ENCODE measurements at regions of chr6 and their contacts with region 1.

Region 1: DNA sequence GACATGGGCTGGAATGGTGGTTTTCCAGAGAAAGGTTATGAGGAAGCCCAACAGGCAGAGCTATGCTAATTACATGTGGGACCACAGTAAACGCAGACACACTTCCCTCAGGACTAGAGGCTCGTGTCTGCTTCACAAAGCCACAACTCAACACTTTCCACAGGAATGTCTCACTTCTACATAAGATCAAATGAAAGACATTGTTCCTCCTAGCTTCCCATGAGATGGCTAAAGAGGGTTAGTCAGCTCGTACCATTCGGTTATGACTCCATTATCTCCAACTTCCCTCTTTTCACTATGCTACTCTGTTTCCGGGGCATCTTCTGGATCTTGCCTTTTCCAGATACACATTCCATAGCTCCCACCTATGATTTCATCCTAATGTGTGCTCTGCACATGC is 29.1 kb upstream of the ZC3H12D start:
- DNase-seq: peak; percentile 12 to 49 (median 43)
- H3K4me3 ChIP-seq: no peak overlapping the region
- H3K4me3 Mint-ChIP-seq: no peak overlapping the region
- H3K27ac ChIP-seq: no peak overlapping the region
- H3K27ac Mint-ChIP-seq: peak overlapping the region in 3 of 7 donors; percentile 33 to 80 (median 73)
- H3K4me1 ChIP-seq: no peaks in the 10 kb centered on the region
- H3K4me1 Mint-ChIP-seq: peaks cover 6% of the 10 kb centered on the region
- H3K27me3 ChIP-seq: no peaks in the 10 kb centered on the region
- H3K27me3 Mint-ChIP-seq: no peaks in the 10 kb centered on the region
- CTCF ChIP-seq: no peak

Region 2: GRCh38 chr6:149028767-149029405 is 485.0 kb before region 1 on chr6:
- intact Hi-C with region 1: loop called in 1 of 2 experiments (anchors 10 kb)
- DNase-seq: peak; percentile 68 to 77 (median 77)
- H3K4me3 ChIP-seq: no peak overlapping the region
- H3K4me3 Mint-ChIP-seq: no peak overlapping the region
- H3K27ac ChIP-seq: no peak overlapping the region
- H3K27ac Mint-ChIP-seq: no peak overlapping the region
- H3K4me1 ChIP-seq: no peaks in the 10 kb centered on the region
- H3K4me1 Mint-ChIP-seq: peaks cover 16% of the 10 kb centered on the region
- H3K27me3 ChIP-seq: no peaks in the 10 kb centered on the region
- H3K27me3 Mint-ChIP-seq: peaks cover 0 to 6% (median 3%) of the 10 kb centered on the region in 3 donors
- CTCF ChIP-seq: peak; percentile 81

Region 3: DNA sequence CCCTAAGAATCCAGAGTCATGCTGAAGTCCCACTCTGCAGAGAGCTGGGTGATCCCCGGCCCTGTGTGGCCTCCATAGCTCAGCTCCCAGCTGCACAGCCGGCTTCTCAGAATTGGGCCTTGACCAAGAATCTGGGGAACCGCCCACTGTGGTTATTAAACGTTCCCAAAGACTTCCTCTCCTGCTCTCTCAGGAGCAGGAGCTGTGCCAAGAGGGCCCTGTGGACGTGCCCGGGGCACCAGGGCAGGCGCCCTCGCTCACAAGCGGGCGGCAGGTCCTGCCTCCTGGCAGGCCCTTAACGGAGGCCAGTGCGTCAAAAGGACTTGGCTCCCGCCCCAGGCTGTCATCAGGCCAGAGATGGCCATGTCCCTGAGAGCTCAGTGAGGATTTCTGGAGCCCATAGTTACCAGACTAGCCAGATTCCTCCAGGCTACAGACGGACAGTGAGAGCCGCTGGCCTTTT is 59.5 kb before region 1 on chr6:
- intact Hi-C with region 1: loop called in 1 of 2 experiments (anchors 5 kb)
- DNase-seq: no peak
- H3K4me3 ChIP-seq: peak overlapping the region in 1 of 3 experiments; percentile 30
- H3K4me3 Mint-ChIP-seq: no peak overlapping the region
- H3K27ac ChIP-seq: no peak overlapping the region
- H3K27ac Mint-ChIP-seq: no peak overlapping the region
- H3K4me1 ChIP-seq: peaks cover 19 to 27% of the 10 kb centered on the region in 2 donors
- H3K4me1 Mint-ChIP-seq: peaks cover 14% of the 10 kb centered on the region
- H3K27me3 ChIP-seq: peaks cover 4 to 17% of the 10 kb centered on the region in 2 donors
- H3K27me3 Mint-ChIP-seq: peaks cover 11 to 22% (median 21%) of the 10 kb centered on the region in 3 donors
- CTCF ChIP-seq: no peak

Region 4: GRCh38 chr6:149468179-149468578 is 45.7 kb before region 1 on chr6:
- intact Hi-C with region 1: no loop called
- DNase-seq: no peak
- H3K4me3 ChIP-seq: no peak overlapping the region
- H3K4me3 Mint-ChIP-seq: no peak overlapping the region
- H3K27ac ChIP-seq: no peak overlapping the region
- H3K27ac Mint-ChIP-seq: peak overlapping the region in 3 of 7 donors; percentile 54 to 79 (median 68)
- H3K4me1 ChIP-seq: peaks cover 12 to 13% of the 10 kb centered on the region in 2 donors
- H3K4me1 Mint-ChIP-seq: peaks cover 23% of the 10 kb centered on the region
- H3K27me3 ChIP-seq: no peaks in the 10 kb centered on the region
- H3K27me3 Mint-ChIP-seq: peaks cover 0 to 2% (median 2%) of the 10 kb centered on the region in 3 donors
- CTCF ChIP-seq: no peak

Region 5: DNA sequence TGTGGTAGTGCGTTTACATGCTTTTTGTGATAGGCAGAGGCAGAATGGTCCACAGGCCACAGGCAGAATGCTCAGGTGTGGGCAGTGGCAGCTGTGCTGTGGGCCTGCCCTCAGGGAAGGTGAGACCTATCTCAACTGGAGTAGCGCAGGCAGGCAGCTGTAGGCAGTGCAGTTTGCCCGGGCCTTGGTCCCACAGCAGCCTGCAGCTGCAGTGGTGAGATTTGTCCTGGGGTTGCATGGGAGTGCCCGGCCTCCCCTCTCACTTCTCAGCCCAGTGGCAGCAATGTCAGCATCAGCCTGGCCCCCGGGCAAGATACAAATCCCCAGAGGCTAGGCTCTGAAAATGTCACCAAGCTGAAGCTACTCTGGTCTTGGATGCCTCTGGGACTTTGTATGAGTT is 38.0 kb after region 1 on chr6:
- intact Hi-C with region 1: no loop called
- DNase-seq: no peak
- H3K4me3 ChIP-seq: no peak overlapping the region
- H3K4me3 Mint-ChIP-seq: no peak overlapping the region
- H3K27ac ChIP-seq: no peak overlapping the region
- H3K27ac Mint-ChIP-seq: no peak overlapping the region
- H3K4me1 ChIP-seq: no peaks in the 10 kb centered on the region
- H3K4me1 Mint-ChIP-seq: no peaks in the 10 kb centered on the region
- H3K27me3 ChIP-seq: peaks cover 0 to 7% of the 10 kb centered on the region in 2 donors
- H3K27me3 Mint-ChIP-seq: peaks cover 12 to 39% (median 16%) of the 10 kb centered on the region in 3 donors
- CTCF ChIP-seq: no peak

Region 6: DNA sequence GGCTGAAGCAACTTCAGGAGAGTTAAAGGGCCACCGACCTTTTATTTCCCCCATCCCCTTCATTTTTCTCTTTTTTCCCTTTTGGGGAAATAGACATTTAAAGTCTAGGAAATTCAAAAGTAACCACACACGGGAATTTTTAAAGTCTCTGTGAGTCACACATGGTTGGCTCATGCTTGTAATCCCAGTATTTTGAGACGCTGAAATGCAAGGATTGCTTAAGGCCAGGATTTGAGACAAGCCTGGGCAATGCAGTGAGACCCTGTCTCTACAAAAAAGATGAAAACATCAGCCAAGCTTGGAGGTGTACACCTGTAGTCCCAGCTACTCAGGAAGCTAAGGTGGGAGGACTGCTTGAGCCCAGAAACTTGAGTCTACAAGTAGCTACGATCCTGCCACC is 100.4 kb after region 1 on chr6:
- intact Hi-C with region 1: no loop called
- DNase-seq: no peak
- H3K4me3 ChIP-seq: no peak overlapping the region
- H3K4me3 Mint-ChIP-seq: no peak overlapping the region
- H3K27ac ChIP-seq: no peak overlapping the region
- H3K27ac Mint-ChIP-seq: no peak overlapping the region
- H3K4me1 ChIP-seq: no peaks in the 10 kb centered on the region
- H3K4me1 Mint-ChIP-seq: peaks cover 5% of the 10 kb centered on the region
- H3K27me3 ChIP-seq: no peaks in the 10 kb centered on the region
- H3K27me3 Mint-ChIP-seq: no peaks in the 10 kb centered on the region
- CTCF ChIP-seq: no peak

Measured in CD14-positive monocyte (primary cell).